HEK293 (cell line): ENCODE measurements at regions of chr9 and their contacts with region 1.

Region 1: GRCh38 chr9:137611623-137612463 is 6.4 kb downstream of the ARRDC1 start:
- H3K4me3 ChIP-seq: no peak overlapping the region
- H3K27ac ChIP-seq: peak overlapping the region; percentile 52
- H3K4me1 ChIP-seq: peaks cover 6% of the 10 kb centered on the region; the same call in 1 of the 2 replicates
- CTCF ChIP-seq: no peak

Region 2: DNA sequence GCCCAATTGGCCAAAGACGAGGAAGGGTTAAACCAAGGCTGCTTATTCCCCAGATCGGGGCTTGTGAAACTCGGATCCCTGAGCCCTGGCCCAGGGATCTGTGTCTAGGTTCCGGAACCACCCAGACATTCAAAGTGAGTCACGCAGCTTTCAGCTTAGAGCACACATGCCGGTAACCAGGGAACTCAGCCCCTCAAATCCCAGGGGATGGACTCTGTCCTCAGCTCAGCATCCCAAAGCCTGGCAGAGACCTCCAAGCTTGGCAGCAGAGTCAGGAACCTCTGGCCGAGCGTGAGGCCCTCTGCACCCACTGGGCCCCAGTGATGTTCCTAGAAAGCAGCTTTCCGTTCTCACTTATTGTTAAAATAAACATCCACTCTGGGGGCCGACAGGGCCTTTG is 66.7 kb before region 1 on chr9:
- CTCF ChIA-PET with region 1: no interaction called
- POLR2A ChIA-PET with region 1: no interaction called
- H3K4me3 ChIP-seq: no peak overlapping the region
- H3K27ac ChIP-seq: no peak overlapping the region
- H3K4me1 ChIP-seq: no peaks in the 10 kb centered on the region
- CTCF ChIP-seq: no peak

Region 3: DNA sequence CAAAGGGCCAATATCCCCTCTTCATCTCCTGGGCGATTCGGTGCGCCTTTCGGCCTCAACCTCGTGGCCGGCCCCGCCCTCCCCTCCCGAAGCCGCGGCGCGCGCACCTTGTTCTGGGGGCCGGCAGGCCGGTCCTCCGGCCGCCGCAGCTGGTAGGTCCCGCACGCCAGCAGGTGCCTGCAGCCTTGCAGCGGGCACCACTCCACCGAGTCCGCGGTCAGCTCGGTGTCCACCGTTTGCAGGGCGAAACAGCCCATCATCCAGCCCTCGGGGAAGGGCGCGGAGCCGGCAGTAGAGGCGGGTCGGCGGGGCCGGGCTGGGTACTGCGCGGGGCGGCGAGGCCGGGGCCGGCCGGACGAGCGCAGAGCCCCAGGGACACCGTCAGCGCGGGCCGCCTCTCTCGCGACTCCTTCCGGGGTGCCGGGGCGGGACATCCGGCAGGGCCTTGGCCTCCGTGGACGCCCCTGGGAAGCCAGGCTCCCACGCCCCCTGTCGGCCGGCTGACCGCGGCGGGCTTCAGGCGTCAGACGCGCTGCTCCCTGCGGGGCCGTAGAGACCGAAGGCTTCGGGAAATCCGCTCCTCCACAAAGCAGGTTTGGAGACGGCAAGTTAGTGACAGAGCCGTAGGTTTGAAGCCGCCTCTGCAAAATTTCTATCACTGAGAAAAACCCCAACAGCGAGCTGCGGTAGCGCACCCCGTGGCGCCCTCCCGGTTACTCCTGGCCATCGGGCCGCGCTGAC is 33.2 kb before region 1 on chr9 and contains the start of gene DPH7:
- CTCF ChIA-PET with region 1: interaction called, 16 read pairs
- POLR2A ChIA-PET with region 1: interaction called, 7 read pairs
- H3K4me3 ChIP-seq: peak within 1 kb of the TSS; percentile 95
- H3K27ac ChIP-seq: peak within 1 kb of the TSS; percentile 84
- H3K4me1 ChIP-seq: no peaks in the 10 kb centered on the region; the same call in 1 of the 2 replicates
- CTCF ChIP-seq: peak; percentile 97

Region 4: DNA sequence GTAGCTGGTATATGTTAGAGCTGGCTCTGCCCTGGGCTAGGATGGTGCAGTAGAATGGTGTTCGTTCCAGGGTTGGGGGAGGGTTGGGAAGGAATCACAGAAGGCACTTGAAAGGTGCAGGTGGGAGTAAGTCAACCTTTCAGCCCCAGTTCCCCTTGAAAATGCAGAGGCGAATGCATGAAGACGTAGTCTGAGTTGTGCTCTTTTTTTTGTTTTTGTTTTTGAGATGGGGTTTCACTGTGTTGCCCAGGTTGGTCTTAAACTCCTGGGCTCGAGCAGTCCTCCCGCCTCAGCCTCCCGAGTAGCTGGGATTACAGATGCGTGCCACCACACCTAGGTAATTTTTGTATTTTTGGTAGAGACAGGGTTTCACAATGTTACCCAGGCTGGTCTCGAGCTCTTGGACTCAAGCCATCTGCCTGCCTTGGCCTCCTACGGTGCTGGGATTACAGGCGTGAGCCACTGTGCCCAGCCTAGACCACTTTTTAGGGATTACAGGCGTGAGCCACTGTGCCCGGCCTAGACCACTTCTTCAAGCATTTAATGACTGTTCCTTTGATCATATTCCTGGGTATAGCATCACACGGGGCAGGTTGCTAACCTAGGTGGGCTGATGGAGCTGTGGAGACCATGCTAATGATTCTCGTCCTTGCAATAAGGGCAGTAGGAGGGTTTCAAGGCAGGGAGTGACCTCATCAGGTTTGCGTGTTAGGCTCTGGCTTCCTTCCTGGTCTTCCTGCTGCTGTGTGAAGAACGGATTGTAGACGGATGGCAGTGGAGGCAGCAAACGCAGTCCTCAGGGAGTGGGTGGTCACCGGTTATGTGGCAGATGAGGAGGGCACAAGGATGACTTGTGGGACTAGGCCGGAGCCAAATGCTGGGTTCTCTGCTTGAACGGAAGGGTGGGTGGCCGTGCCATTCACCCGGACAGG is 20.7 kb after region 1 on chr9:
- CTCF ChIA-PET with region 1: no interaction called
- POLR2A ChIA-PET with region 1: no interaction called
- H3K4me3 ChIP-seq: no peak overlapping the region
- H3K27ac ChIP-seq: no peak overlapping the region
- H3K4me1 ChIP-seq: peaks cover 11% of the 10 kb centered on the region
- CTCF ChIP-seq: no peak

Region 5: DNA sequence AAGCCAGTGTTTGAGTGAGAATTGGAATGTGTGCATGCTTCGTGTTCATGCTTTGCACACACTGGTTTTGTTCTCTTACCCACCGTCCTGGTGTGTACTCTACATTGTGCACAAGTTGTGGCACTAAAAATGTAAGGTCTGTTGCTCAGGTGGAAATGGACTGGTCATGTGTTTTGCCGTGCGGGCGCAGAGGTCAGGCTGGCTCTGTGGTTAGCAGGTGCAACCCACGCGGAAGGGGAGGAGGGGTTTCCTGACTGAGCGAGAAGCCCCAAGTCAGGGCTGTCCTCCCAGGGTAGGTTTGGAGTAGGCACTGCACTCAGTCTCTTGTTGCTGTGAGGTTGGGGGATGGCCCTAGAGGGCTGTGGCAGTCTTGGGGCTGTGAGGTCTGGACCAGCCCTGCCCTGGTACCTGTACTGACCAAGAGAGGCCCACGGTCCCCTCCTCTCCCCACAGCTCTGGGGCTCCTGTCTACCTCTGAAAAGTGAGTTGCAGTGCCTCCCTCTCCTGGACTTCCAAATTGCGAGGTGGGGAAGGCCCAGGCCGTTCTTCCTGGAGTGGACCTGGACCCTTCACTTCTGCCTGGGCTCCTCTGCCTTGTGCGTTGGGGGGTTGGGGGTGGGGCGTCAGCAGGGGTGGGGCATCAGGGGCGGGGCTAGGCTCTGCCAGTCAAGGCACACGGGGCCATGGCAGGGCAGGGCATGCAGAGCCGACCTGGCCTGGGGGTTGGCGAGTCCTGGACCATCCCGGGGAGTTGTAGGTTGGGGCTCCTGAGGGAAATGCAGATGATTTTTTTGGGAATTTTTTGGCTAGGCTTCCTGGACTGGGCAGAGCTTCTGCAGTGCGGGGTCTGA is 93.8 kb after region 1 on chr9:
- CTCF ChIA-PET with region 1: no interaction called
- POLR2A ChIA-PET with region 1: no interaction called
- H3K4me3 ChIP-seq: no peak overlapping the region
- H3K27ac ChIP-seq: no peak overlapping the region
- H3K4me1 ChIP-seq: no peaks in the 10 kb centered on the region
- CTCF ChIP-seq: no peak